Ovary (tissue), 10 donors: ENCODE measurements at regions of chr9 and their contacts with region 1.

Region 1: DNA sequence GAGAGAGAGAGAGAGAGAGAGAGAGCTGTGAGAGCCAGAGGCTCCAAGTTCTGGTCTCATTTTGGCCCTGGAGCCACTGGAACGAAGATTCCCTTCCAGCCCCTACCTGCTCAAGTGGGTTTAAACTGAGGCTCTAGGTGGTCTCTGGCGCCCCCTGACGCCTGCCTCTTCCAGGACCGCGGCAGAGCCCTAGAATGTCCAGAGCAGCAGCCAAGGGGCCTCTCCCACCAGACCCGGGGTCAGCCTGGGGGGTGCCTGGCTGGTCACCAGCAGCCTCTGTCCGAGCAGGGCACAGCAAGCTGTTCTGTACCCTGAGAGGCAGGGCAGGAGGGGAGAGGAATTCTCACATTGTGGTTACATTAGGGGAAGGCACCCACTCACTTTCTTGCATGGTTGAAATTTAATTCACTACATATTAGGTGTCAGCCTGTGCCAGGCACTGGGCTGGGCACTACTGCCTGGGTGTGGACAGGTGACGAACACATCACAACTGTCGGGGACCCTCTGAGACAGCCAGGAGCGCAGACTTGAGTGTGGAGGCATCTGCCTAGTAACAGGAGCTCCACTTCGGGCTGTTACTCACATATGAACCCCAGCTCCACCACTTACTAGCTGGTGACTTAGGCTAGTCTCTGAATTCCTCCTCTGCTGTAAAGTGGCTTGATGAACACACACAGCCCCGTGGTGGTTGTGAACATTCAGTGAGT is 44.5 kb downstream of the AMBP start:
- DNase-seq: peak in 4 of 5 donors; percentile 15 to 62 (median 47)
- H3K4me3 ChIP-seq: no peak overlapping the region
- H3K27ac ChIP-seq: no peak overlapping the region
- H3K4me1 ChIP-seq: peaks cover 3% of the 10 kb centered on the region
- H3K27me3 ChIP-seq: no peaks in the 10 kb centered on the region
- CTCF ChIP-seq: peak in 1 of 3 donors; percentile 41
- EP300 ChIP-seq: no peak
- POLR2A ChIP-seq: no peak

Region 2: GRCh38 chr9:113712023-113712422 is 321.5 kb before region 1 on chr9:
- intact Hi-C with region 1: no loop called
- DNase-seq: no peak
- H3K4me3 ChIP-seq: no peak overlapping the region
- H3K27ac ChIP-seq: no peak overlapping the region
- H3K4me1 ChIP-seq: no peaks in the 10 kb centered on the region
- H3K27me3 ChIP-seq: no peaks in the 10 kb centered on the region
- CTCF ChIP-seq: no peak
- EP300 ChIP-seq: no peak
- POLR2A ChIP-seq: no peak

Region 3: GRCh38 chr9:113741886-113742854 is 291.4 kb before region 1 on chr9:
- intact Hi-C with region 1: loop called in 1 of 4 experiments (anchors 10 kb)
- DNase-seq: no peak
- H3K4me3 ChIP-seq: no peak overlapping the region
- H3K27ac ChIP-seq: no peak overlapping the region
- H3K4me1 ChIP-seq: no peaks in the 10 kb centered on the region
- H3K27me3 ChIP-seq: no peaks in the 10 kb centered on the region
- CTCF ChIP-seq: no peak
- EP300 ChIP-seq: no peak
- POLR2A ChIP-seq: no peak

Region 4: DNA sequence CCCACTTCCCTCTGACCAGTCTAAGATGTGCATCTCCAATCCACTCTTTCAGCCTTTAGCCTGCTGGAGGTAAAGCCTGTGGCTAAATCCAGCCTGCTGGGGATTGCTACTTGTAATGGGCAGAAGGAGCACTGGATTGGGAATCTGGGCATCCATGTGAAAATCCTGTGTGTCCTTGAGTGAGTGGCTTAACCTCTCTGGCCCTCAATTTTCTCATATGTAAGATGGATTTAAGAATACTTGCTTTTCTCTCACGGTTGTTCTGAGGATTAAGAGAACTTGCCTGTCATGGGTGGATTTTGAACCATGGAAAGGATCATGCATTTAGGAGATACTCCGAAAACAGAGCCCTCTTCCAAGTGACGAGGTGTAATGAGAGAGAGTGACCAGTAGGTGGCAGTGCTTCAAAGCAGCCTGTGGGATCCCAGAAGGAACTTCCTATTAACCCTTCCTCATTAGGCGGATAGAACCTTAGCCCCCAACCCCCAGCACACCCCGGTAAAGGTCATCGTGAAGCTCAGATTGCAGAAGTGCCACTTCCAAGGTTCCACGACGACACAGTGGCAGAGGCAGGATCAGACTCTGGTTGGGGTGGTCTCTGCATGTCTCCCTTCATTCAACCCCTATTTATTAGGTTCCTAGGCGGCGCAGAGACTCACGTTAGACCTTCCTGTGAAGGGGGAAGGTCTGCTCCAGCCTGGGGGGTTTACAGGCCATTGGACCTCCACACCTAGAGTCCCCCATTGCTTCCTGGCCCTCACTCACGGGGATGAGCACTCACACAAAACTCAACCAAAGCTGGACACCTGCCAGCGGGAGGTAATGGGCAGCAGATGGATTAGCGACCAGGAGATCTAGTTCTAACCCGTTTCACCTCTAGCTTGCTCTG is 226.1 kb before region 1 on chr9:
- intact Hi-C with region 1: loop called in 1 of 4 experiments (anchors 5 kb)
- DNase-seq: peak; percentile 37 to 67 (median 54)
- H3K4me3 ChIP-seq: no peak overlapping the region
- H3K27ac ChIP-seq: no peak overlapping the region
- H3K4me1 ChIP-seq: peaks cover 4% of the 10 kb centered on the region
- H3K27me3 ChIP-seq: no peaks in the 10 kb centered on the region
- CTCF ChIP-seq: peak; percentile 67 to 86 (median 80)
- EP300 ChIP-seq: no peak
- POLR2A ChIP-seq: no peak

Region 5: GRCh38 chr9:114196979-114197622 is 163.6 kb after region 1 on chr9:
- intact Hi-C with region 1: no loop called
- DNase-seq: no peak
- H3K4me3 ChIP-seq: no peak overlapping the region
- H3K27ac ChIP-seq: no peak overlapping the region
- H3K4me1 ChIP-seq: peaks cover 2% of the 10 kb centered on the region
- H3K27me3 ChIP-seq: no peaks in the 10 kb centered on the region
- CTCF ChIP-seq: no peak
- EP300 ChIP-seq: no peak
- POLR2A ChIP-seq: no peak